Sciatic nerve (tissue), 2 donors: ENCODE measurements at regions of chr9 and their contacts with region 1.

Region 1: GRCh38 chr9:129139993-129140396 is 28.8 kb downstream of the PTPA start:
- DNase-seq: peak; percentile 93
- ATAC-seq: peak; percentile 88

Region 2: GRCh38 chr9:129482521-129483414 is 342.8 kb after region 1 on chr9:
- intact Hi-C with region 1: loop called (anchors 10 kb)
- DNase-seq: peak; percentile 96
- ATAC-seq: peak; percentile 56

Region 3: GRCh38 chr9:129624168-129624759 is 484.3 kb after region 1 on chr9:
- intact Hi-C with region 1: loop called (anchors 5 kb)
- DNase-seq: no peak
- ATAC-seq: peak; percentile 3